B cell (primary cell): ENCODE measurements at regions of chr3 and their contacts with region 1.

Region 1: DNA sequence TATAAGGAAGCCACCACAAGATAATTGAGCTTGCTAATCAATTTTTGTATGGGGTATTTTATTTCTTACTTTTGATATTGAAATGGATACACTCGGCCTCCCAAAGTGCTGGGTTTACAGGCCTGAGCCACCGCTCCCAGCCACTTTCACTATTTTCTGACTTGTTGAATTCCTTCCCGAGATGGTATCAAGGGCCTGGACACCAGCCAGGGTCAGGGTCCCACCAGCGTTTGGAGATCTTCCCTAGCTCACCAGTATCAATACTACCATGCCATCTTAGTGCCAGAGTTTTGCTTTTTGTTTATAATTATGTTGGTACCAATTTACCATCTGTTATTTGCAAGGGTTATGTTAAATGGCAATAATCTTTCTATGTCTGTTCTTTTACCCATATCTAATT is 5.5 kb upstream of the SELENOT start:
- DNase-seq: no peak
- ATAC-seq: no peak
- H3K4me3 ChIP-seq: no peak overlapping the region
- H3K4me3 Mint-ChIP-seq: no peak overlapping the region
- H3K27ac ChIP-seq: no peak overlapping the region
- H3K27ac Mint-ChIP-seq: no peak overlapping the region
- H3K4me1 ChIP-seq: peaks cover 29 to 36% of the 10 kb centered on the region in 2 donors
- H3K4me1 Mint-ChIP-seq: peaks cover 47% of the 10 kb centered on the region
- H3K27me3 ChIP-seq: no peaks in the 10 kb centered on the region
- H3K27me3 Mint-ChIP-seq: no peaks in the 10 kb centered on the region
- CTCF ChIP-seq: no peak

Region 2: GRCh38 chr3:150703299-150704134 is 105.9 kb after region 1 on chr3 and contains the start of gene ERICH6:
- CTCF ChIA-PET with region 1: interaction called, 3 read pairs
- POLR2A ChIA-PET with region 1: interaction called, 7 read pairs
- intact Hi-C with region 1: loop called (anchors 1 kb)
- DNase-seq: peak; percentile 93
- ATAC-seq: peak; percentile 92
- H3K4me3 ChIP-seq: peak within 1 kb of the TSS; percentile 68 to 88 (median 76)
- H3K4me3 Mint-ChIP-seq: peak within 1 kb of the TSS; percentile 98
- H3K27ac ChIP-seq: peak within 1 kb of the TSS; percentile 84 to 97
- H3K27ac Mint-ChIP-seq: peak within 1 kb of the TSS; percentile 97
- H3K4me1 ChIP-seq: peaks cover 0 to 13% of the 10 kb centered on the region in 2 donors
- H3K4me1 Mint-ChIP-seq: peaks cover 16% of the 10 kb centered on the region
- H3K27me3 ChIP-seq: no peaks in the 10 kb centered on the region
- H3K27me3 Mint-ChIP-seq: no peaks in the 10 kb centered on the region
- CTCF ChIP-seq: no peak
- total RNA-seq, gene ERICH6: 0.44 TPM in 1 of 2 replicates, not detected in the other